AG04449 (cell line): ENCODE measurements at regions of chr4 and their contacts with region 1.

Region 1: DNA sequence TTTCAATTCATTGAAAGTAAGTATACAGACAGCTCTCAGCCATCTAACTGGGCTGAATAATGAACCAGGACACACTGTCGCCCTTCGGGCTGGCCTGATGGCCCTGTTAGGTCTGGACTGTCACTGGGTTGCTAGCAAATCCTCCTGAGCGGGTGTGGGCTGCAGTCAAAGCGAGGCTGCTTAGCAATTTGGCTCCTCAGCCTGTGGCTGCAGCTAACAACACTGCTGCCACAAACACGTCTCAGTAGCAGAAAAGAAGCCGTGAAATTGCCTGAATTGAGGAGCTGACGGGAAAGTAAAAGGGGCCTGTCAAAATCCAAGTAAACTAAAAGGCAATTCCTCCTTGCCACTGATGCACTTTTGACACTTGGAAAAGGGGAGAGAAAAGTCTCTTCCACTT is 72.8 kb downstream of the SMIM20 start:
- DNase-seq: no peak
- H3K4me3 ChIP-seq: no peak overlapping the region
- CTCF ChIP-seq: no peak

Region 2: GRCh38 chr4:25962393-25962792 is 24.4 kb before region 1 on chr4:
- CTCF ChIA-PET with region 1: interaction called, 70 read pairs
- POLR2A ChIA-PET with region 1: no interaction called
- DNase-seq: no peak
- H3K4me3 ChIP-seq: no peak overlapping the region
- CTCF ChIP-seq: no peak

Region 3: DNA sequence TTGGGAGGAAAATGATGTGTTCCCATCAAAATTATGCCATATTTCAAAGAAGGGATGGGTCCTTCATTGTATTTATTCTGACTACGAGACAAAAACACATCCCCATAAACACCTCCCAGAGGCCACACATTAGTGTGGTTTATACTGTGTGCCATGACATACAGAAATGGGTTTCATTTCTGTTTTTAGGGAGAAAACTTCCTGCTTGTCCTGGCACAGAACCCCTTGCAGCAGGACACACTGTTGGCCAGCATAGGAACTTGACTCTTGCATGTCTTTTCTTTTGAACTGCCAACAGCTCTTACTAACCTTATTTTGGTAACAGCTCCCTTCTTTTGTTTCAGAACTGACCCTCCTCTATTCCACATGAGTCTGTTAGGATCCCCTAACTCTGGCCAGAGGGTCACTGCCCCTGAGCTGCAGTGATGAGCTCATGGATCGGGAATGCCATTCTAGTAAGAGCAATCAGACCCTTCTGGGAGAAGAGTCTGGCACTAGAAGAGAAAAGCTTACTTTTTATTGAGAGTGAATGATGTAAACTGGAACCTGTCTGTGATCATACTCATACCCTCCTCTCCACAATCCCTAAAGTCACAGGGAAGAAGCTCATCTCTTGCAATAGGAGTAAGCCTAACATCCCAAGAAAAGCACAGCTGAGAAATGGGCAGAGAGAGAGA is 13.6 kb after region 1 on chr4:
- CTCF ChIA-PET with region 1: interaction called, 63 read pairs
- POLR2A ChIA-PET with region 1: no interaction called
- DNase-seq: no peak
- H3K4me3 ChIP-seq: no peak overlapping the region
- CTCF ChIP-seq: no peak

Region 4: GRCh38 chr4:26028793-26029567 is 42.2 kb after region 1 on chr4:
- CTCF ChIA-PET with region 1: interaction called, 11 read pairs
- POLR2A ChIA-PET with region 1: no interaction called
- DNase-seq: no peak
- H3K4me3 ChIP-seq: no peak overlapping the region
- CTCF ChIP-seq: peak; percentile 98

Region 5: GRCh38 chr4:26410385-26411293 is 423.8 kb after region 1 on chr4:
- CTCF ChIA-PET with region 1: interaction called, 61 read pairs
- POLR2A ChIA-PET with region 1: no interaction called
- DNase-seq: no peak
- H3K4me3 ChIP-seq: no peak overlapping the region
- CTCF ChIP-seq: peak; percentile 30